ENCODE measurements at regions of chr18 and their contacts with region 1.

Region 1: DNA sequence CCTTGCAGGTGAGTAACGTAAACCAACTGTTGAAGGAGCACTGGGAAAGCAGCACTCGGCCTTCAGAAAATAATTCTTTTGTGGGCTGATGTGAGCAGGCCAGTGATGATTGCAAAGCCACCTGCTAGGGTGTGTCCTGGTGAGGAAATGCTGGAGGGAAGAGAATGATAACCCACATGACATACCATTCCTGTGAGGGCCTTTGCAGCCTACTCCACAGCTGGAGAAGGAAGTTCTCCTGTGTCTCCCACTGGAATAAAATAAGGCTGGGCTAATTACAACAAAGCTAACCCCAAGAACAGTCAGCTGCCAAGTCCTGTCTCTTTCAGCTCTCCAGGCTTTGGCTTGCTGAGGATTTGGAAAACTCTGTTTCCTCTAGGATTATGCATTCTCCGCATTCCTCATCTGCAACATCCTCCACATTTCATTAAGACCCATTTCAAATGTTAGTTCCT is 16.7 kb upstream of the DSG1 start:
- DNase-seq: peak in 2 of 5 donors; percentile 11 to 31
- ATAC-seq: peak; percentile 32 to 90 (median 54)
- H3K4me3 ChIP-seq: no peak overlapping the region
- H3K27ac ChIP-seq: no peak overlapping the region
- H3K4me1 ChIP-seq: peaks cover 0 to 14% (median 3%) of the 10 kb centered on the region in 12 donors
- H3K27me3 ChIP-seq: no peaks in the 10 kb centered on the region
- CTCF ChIP-seq: no peak
- POLR2A ChIP-seq: no peak

Region 2: GRCh38 chr18:31241900-31242409 is 59.3 kb before region 1 on chr18:
- intact Hi-C with region 1: loop called in 2 of 10 experiments (anchors 10 kb)
- DNase-seq: no peak
- ATAC-seq: no peak
- H3K4me3 ChIP-seq: no peak overlapping the region
- H3K27ac ChIP-seq: no peak overlapping the region
- H3K4me1 ChIP-seq: peaks cover 0 to 45% (median 19%) of the 10 kb centered on the region in 12 donors
- H3K27me3 ChIP-seq: no peaks in the 10 kb centered on the region
- CTCF ChIP-seq: peak in 6 of 12 donors; percentile 12 to 38 (median 28)
- POLR2A ChIP-seq: no peak

Region 3: DNA sequence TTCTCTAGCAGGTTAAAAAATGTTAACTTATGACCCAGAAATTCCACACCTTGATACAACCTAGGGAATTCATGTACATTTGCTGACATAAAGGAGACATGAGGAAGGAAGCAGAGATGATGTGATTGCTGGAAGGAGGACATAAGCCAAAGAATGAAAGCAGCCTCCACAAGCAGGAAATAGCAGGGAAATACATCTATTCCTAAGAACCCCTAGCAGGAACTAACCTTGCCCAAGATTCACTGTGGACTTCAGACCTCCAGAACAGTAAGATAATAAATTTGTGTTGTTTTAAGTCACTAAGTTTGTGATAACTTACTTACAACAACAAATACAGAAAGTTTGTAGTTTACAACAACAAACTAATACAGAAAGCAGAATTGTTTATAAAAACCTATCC is 70.8 kb after region 1 on chr18:
- intact Hi-C with region 1: loop called in 1 of 10 experiments (anchors 10 kb)
- DNase-seq: no peak
- ATAC-seq: no peak
- H3K4me3 ChIP-seq: no peak overlapping the region
- H3K27ac ChIP-seq: no peak overlapping the region
- H3K4me1 ChIP-seq: no peaks in the 10 kb centered on the region
- H3K27me3 ChIP-seq: no peaks in the 10 kb centered on the region
- CTCF ChIP-seq: no peak
- POLR2A ChIP-seq: no peak